Activated CD8-positive, alpha-beta T cell treated with anti-CD3 and anti-CD28 coated beads, Interleukin-2, amount 10 ng/mL, durations not matched to agents 7 days and 5 days (primary cell): ENCODE measurements at regions of chr11 and their contacts with region 1.

Region 1: DNA sequence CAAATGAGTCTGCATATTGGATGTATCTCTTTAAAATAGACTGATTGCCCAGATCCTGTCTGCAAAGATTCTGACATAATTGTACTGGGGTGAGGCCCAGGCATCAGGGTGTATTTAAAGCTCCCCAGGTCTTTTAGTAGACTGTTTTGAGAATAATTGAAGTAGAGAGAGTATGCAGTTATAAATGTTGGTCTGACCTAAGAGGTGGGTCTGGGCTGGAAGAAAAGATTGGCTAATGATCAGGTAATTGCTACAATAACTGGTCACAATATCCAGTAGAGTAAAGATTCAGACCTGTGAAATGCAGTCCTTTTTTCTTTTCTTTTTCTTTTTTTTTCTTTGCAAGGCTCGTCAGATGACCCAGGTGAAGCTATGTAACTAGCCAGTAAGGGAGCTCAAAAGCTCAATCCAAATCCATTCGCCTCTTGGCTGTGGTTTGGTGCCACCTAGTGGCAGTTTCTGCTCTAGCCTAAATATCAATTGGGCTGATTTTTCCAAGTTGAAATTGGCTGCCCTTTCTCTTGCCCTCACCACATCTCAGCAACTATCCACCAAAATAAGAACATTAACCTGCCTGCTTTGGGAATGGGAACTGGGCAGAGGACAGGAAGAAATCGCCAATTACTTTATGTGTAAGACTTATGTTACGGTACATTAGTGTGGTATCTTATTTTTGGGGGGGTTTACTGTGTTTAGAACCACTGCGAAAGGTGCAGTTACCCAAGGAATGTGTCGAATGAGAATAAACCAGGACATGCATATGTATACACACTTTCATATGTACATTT is 45.9 kb downstream of the ZNF143 start:
- DNase-seq: peak; percentile 85
- ATAC-seq: peak; percentile 79
- H3K4me3 Mint-ChIP-seq: no peak overlapping the region
- H3K27ac Mint-ChIP-seq: no peak overlapping the region
- H3K4me1 Mint-ChIP-seq: peaks cover 8% of the 10 kb centered on the region
- H3K27me3 Mint-ChIP-seq: no peaks in the 10 kb centered on the region

Region 2: GRCh38 chr11:9092853-9093778 is 413.6 kb before region 1 on chr11:
- CTCF ChIA-PET with region 1: interaction called, 11 read pairs
- POLR2A ChIA-PET with region 1: no interaction called
- DNase-seq: no peak
- ATAC-seq: no peak
- H3K4me3 Mint-ChIP-seq: no peak overlapping the region
- H3K27ac Mint-ChIP-seq: no peak overlapping the region
- H3K4me1 Mint-ChIP-seq: peaks cover 4% of the 10 kb centered on the region
- H3K27me3 Mint-ChIP-seq: peaks cover 51% of the 10 kb centered on the region

Region 3: DNA sequence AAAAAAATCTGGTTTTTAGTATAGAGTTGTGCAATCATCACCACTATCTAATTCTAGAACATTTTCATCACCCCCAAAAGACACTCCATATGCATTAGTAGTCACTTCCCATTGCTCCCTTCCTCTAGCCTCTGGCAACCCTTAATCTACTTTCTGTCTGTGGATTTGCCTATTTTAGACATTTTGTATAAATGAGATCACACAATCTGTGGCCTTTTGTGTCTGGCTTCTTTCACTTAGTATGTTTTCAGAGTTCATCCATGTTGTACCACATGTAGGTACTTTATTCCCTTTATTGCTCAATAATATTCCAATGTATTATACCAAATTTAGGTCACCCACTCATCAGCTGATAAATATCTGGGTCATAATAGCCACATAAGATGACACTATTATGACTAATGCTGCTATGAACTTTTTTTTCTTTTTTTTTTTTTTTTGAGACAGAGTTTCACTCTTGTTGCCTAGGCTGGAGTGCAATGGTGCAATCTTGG is 347.7 kb before region 1 on chr11:
- CTCF ChIA-PET with region 1: interaction called, 52 read pairs
- POLR2A ChIA-PET with region 1: no interaction called
- DNase-seq: no peak
- ATAC-seq: no peak
- H3K4me3 Mint-ChIP-seq: no peak overlapping the region
- H3K27ac Mint-ChIP-seq: no peak overlapping the region
- H3K4me1 Mint-ChIP-seq: peaks cover 3% of the 10 kb centered on the region
- H3K27me3 Mint-ChIP-seq: no peaks in the 10 kb centered on the region

Region 4: GRCh38 chr11:9460322-9461067 is 46.2 kb before region 1 on chr11 and contains the start of gene ZNF143:
- CTCF ChIA-PET with region 1: interaction called, 13 read pairs
- POLR2A ChIA-PET with region 1: interaction called, 7 read pairs
- DNase-seq: peak; percentile 100
- ATAC-seq: peak; percentile 91
- H3K4me3 Mint-ChIP-seq: peak within 1 kb of the TSS; percentile 92
- H3K27ac Mint-ChIP-seq: peak within 1 kb of the TSS; percentile 96
- H3K4me1 Mint-ChIP-seq: peaks cover 23% of the 10 kb centered on the region
- H3K27me3 Mint-ChIP-seq: no peaks in the 10 kb centered on the region
- total RNA-seq, gene ZNF143: 31.4 to 33.7 TPM

Region 5: GRCh38 chr11:9479899-9480298 is 26.8 kb before region 1 on chr11:
- CTCF ChIA-PET with region 1: interaction called, 10 read pairs
- POLR2A ChIA-PET with region 1: no interaction called
- DNase-seq: no peak
- ATAC-seq: no peak
- H3K4me3 Mint-ChIP-seq: no peak overlapping the region
- H3K27ac Mint-ChIP-seq: no peak overlapping the region
- H3K4me1 Mint-ChIP-seq: no peaks in the 10 kb centered on the region
- H3K27me3 Mint-ChIP-seq: no peaks in the 10 kb centered on the region

Region 6: GRCh38 chr11:9534791-9535781 is 28.4 kb after region 1 on chr11:
- CTCF ChIA-PET with region 1: interaction called, 10 read pairs
- POLR2A ChIA-PET with region 1: no interaction called
- DNase-seq: peak; percentile 84
- ATAC-seq: peak; percentile 72
- H3K4me3 Mint-ChIP-seq: no peak overlapping the region
- H3K27ac Mint-ChIP-seq: no peak overlapping the region
- H3K4me1 Mint-ChIP-seq: peaks cover 5% of the 10 kb centered on the region
- H3K27me3 Mint-ChIP-seq: no peaks in the 10 kb centered on the region

Region 7: DNA sequence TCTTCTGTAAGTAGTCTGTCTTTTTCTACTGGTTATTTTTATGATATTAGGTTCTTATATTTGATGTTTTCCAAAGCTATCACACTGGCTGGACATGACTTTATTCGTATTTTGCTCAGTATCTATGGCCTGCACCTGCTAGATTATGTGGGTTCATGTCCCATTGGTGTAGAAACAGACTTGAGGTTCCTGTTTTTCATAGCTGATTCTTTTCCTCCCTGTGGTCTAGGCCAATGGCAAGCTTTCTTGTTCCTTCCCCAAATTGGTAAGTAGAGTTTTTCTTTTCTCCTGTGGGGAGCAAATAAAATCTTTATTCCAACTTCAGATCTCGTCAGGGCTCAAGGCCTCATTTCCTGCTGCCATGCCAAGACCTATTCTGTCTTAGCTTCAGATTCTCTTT is 127.0 kb after region 1 on chr11:
- CTCF ChIA-PET with region 1: no interaction called
- POLR2A ChIA-PET with region 1: no interaction called
- DNase-seq: no peak
- ATAC-seq: no peak
- H3K4me3 Mint-ChIP-seq: no peak overlapping the region
- H3K27ac Mint-ChIP-seq: no peak overlapping the region
- H3K4me1 Mint-ChIP-seq: no peaks in the 10 kb centered on the region
- H3K27me3 Mint-ChIP-seq: peaks cover 5% of the 10 kb centered on the region

Region 8: GRCh38 chr11:9748361-9748970 is 241.8 kb after region 1 on chr11:
- CTCF ChIA-PET with region 1: interaction called, 20 read pairs
- POLR2A ChIA-PET with region 1: no interaction called
- DNase-seq: peak; percentile 84
- ATAC-seq: peak; percentile 99
- H3K4me3 Mint-ChIP-seq: no peak overlapping the region
- H3K27ac Mint-ChIP-seq: no peak overlapping the region
- H3K4me1 Mint-ChIP-seq: peaks cover 21% of the 10 kb centered on the region
- H3K27me3 Mint-ChIP-seq: no peaks in the 10 kb centered on the region